WTC11 (cell line): ENCODE measurements at regions of chr21 and their contacts with region 1.

Region 1: DNA sequence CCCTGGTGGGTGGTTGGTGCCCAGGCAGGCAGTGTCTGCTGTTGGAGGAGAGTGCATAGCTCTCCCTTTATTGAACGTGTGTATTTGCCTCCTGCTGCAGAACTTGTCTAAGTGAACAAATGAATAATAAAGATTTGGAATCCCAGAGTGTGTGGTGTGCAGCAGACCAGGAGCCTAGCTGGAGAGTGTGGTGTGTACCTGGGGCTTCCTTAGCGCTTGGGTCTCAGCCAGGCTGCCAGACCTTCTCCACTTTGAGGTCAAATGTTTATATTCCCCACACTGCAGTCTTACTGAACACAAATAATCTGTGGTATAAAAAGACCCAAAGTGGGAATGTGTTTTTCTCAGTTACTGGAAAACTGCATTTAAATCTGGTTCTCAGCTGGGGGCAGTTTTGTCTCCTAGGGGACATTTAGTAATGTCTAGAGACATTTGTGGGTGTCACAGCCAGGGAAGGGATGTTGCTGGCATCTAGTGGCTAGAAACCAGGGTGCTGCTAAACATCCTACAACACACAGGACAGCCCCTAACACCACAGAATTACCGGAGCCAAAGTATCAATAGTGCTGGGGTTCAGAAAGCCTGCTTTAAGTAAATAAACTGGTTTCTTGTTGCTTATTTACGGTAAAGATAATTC is 23.6 kb downstream of the SLC37A1 start:
- DNase-seq: peak; percentile 2
- ATAC-seq: no peak
- H3K4me3 Mint-ChIP-seq: no peak overlapping the region
- H3K27ac Mint-ChIP-seq: no peak overlapping the region
- H3K4me1 Mint-ChIP-seq: peaks cover 10% of the 10 kb centered on the region
- H3K27me3 Mint-ChIP-seq: no peaks in the 10 kb centered on the region
- CTCF ChIP-seq: no peak

Region 2: GRCh38 chr21:42486531-42486930 is 50.7 kb before region 1 on chr21:
- CTCF ChIA-PET with region 1: no interaction called
- POLR2A ChIA-PET with region 1: no interaction called
- DNase-seq: no peak
- ATAC-seq: no peak
- H3K4me3 Mint-ChIP-seq: no peak overlapping the region
- H3K27ac Mint-ChIP-seq: no peak overlapping the region
- H3K4me1 Mint-ChIP-seq: peaks cover 6% of the 10 kb centered on the region
- H3K27me3 Mint-ChIP-seq: peaks cover 6% of the 10 kb centered on the region; the same call in 1 of the 2 replicates
- CTCF ChIP-seq: no peak

Region 3: DNA sequence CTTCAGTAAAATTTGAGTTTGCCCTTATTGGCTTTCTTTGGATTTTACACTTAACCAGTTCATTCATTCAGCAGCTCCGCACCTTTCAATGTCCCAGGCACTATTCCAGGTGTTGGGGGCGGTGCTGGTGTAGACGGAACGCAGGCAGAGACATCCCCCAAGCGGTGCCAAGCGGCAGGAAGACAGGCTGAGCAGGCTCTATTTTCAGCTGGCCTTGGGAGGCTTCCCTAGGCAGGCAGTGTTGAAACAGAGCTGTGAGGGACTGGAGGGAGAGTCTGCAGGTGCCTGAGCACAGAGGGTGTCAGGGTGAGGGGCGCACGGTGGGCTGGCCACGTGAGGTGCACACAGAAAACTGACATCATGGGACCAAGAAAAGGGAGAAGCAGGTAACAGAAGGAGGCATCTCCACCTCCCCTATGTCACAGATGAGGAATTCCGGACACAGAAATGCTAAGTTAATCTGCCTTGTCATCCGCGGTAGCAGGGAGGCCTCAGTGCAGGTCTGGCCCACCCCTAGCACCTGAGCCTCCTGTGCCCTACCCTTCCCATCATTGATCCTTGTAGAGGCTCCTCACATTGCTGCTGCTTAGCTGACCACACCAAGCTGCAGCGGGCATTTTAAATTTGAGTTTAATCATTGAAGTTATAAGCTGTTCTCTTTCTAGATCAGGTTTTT is 17.2 kb after region 1 on chr21:
- CTCF ChIA-PET with region 1: interaction called, 14 read pairs
- POLR2A ChIA-PET with region 1: interaction called, 3 read pairs
- DNase-seq: peak; percentile 32
- ATAC-seq: peak; percentile 74
- H3K4me3 Mint-ChIP-seq: no peak overlapping the region
- H3K27ac Mint-ChIP-seq: peak overlapping the region; percentile 76
- H3K4me1 Mint-ChIP-seq: peaks cover 35% of the 10 kb centered on the region
- H3K27me3 Mint-ChIP-seq: no peaks in the 10 kb centered on the region
- CTCF ChIP-seq: no peak